Adrenal gland (tissue), 19 donors: ENCODE measurements at regions of chr12 and their contacts with region 1.

Region 1: GRCh38 chr12:111313833-111314259 is 55.0 kb downstream of the PHETA1 start:
- DNase-seq: peak; percentile 62 to 81 (median 74)
- H3K4me3 ChIP-seq: peak overlapping the region in 1 of 4 donors; percentile 11
- H3K27ac ChIP-seq: no peak overlapping the region
- H3K4me1 ChIP-seq: no peaks in the 10 kb centered on the region
- H3K27me3 ChIP-seq: peaks cover 13% of the 10 kb centered on the region
- CTCF ChIP-seq: peak; percentile 80 to 97 (median 91)
- POLR2A ChIP-seq: no peak

Region 2: DNA sequence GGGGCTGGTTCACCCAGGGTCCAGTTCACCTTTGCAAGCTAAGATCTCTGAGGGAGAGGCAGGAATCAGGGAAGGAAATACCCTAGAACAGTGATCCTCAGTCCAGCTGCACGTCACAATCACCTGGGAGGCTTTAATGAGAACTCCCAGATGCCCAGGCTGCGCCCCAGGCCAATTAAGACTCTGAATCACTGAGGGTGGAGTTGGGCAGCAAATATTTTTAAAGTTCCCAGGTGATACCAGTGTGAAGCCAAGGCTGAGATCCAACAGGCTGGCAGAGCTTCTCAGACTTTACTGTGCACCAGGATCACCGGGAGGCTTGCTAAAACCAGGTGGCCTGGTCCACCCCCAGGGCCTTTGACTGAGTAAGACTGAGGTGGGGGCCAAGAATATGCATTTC is 417.3 kb before region 1 on chr12:
- intact Hi-C with region 1: loop called in 1 of 2 experiments (anchors 5 kb)
- DNase-seq: no peak
- H3K4me3 ChIP-seq: no peak overlapping the region
- H3K27ac ChIP-seq: no peak overlapping the region
- H3K4me1 ChIP-seq: peaks cover 0 to 4% of the 10 kb centered on the region in 2 donors
- H3K27me3 ChIP-seq: no peaks in the 10 kb centered on the region
- CTCF ChIP-seq: no peak
- POLR2A ChIP-seq: no peak

Region 3: DNA sequence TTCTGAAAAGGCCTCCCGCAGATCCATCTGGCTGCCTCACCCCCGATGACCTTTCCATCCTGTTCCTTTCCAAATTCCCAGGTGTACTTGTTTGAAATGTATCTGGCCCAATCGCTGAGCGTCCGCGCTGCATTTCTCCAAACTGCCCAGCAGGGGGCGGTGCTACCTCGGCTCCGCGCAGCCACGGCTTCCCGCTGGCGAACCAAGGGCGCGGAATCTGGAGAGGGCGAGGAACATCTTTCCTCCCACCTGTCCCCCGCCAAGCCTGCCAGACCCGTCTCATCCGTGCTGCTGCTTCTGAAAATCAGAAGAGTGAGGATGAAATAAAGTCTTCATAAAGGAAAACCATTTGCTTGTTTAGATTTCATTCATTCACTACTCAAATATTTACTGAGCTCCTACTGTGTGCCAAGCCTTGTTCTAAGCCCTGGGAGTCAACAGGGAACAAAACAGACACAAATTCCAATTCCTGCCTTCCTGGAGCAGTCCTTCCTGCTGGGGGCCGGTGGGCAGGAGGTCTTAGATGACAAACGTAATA is 376.7 kb before region 1 on chr12:
- intact Hi-C with region 1: loop called (anchors 5 to 10 kb)
- DNase-seq: peak; percentile 35 to 69 (median 45)
- H3K4me3 ChIP-seq: no peak overlapping the region
- H3K27ac ChIP-seq: no peak overlapping the region
- H3K4me1 ChIP-seq: no peaks in the 10 kb centered on the region
- H3K27me3 ChIP-seq: peaks cover 11% of the 10 kb centered on the region
- CTCF ChIP-seq: peak; percentile 74 to 93 (median 82)
- POLR2A ChIP-seq: no peak

Region 4: DNA sequence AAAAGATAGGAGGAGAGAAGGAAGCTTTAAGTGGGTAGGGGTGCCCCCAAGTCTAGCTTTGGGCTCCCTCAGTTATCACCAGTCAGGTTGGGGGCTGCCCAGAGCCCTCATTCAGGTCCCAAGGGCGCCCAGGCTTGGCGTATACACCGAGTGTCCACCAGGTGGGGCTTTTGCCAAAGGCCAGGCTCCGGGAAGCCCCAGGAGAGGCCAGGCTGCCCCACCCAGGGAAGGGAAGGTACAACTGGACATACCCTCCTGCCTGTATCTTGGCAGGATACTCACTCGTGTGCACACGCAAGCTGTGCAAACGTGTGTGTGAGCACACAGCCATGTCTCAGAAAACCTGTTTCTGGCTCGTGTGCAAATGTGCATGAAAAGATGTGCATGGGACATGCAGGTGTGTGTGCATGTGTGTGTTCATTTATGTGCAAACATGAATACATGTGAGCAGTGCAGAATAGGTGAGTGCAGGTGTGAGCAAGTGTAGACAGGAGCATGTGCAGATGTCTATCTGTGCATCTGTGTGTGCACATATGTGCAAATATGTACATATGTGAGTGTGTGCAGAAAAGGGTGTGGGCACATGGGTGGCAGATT is 289.5 kb before region 1 on chr12:
- intact Hi-C with region 1: loop called in 1 of 2 experiments (anchors 5 kb)
- DNase-seq: peak; percentile 33 to 70 (median 55)
- H3K4me3 ChIP-seq: no peak overlapping the region
- H3K27ac ChIP-seq: no peak overlapping the region
- H3K4me1 ChIP-seq: no peaks in the 10 kb centered on the region
- H3K27me3 ChIP-seq: peaks cover 7% of the 10 kb centered on the region
- CTCF ChIP-seq: peak; percentile 50 to 79 (median 74)
- POLR2A ChIP-seq: no peak